Lower lobe of right lung (tissue), 2 donors: ENCODE measurements at regions of chr17 and their contacts with region 1.

Region 1: GRCh38 chr17:38485146-38485468 is 56.8 kb downstream of the ARHGAP23 start:
- DNase-seq: no peak
- ATAC-seq: no peak
- H3K4me3 ChIP-seq: no peak overlapping the region
- H3K27ac ChIP-seq: peak overlapping the region; percentile 7
- H3K4me1 ChIP-seq: no peaks in the 10 kb centered on the region
- H3K27me3 ChIP-seq: no peaks in the 10 kb centered on the region
- CTCF ChIP-seq: peak; percentile 5

Region 2: DNA sequence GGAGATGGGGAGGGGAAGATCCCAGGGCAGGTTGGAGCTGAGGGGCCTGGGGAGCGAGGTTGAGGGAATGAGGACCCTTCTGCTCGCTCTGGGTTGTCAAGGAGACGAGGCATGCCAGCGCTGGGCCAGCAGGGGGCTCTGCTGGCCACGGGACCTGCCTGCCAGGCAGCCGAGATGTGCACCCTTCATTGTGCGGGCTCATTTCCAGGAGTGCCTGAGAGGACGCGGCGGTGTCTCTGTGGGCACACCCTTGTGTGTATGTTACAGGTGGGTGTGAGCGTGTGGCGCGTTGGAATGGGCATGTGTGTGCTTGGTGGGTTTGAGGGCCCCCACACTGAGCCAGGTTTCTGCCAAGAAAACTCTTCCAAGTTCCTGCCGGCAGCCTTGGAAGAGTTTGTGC is 41.0 kb before region 1 on chr17:
- intact Hi-C with region 1: loop called (anchors 5 kb)
- DNase-seq: peak; percentile 76
- ATAC-seq: peak; percentile 84
- H3K4me3 ChIP-seq: no peak overlapping the region
- H3K27ac ChIP-seq: no peak overlapping the region
- H3K4me1 ChIP-seq: peaks cover 25% of the 10 kb centered on the region
- H3K27me3 ChIP-seq: no peaks in the 10 kb centered on the region
- CTCF ChIP-seq: peak; percentile 84